Activated T-helper 1 cell treated with anti-CD3 and anti-CD28 coated beads, Interleukin-12 subunit alpha, Interleukin-12 subunit beta, Interleukin-2, Interleukin-4 antibody, amounts not matched to agents 30 ng/mL and 10 ng/mL and 1 ng/mL, durations not matched to agents 14 hours and 24 hours and 36 hours (primary cell): ENCODE measurements at regions of chr11 and their contacts with region 1.

Region 1: DNA sequence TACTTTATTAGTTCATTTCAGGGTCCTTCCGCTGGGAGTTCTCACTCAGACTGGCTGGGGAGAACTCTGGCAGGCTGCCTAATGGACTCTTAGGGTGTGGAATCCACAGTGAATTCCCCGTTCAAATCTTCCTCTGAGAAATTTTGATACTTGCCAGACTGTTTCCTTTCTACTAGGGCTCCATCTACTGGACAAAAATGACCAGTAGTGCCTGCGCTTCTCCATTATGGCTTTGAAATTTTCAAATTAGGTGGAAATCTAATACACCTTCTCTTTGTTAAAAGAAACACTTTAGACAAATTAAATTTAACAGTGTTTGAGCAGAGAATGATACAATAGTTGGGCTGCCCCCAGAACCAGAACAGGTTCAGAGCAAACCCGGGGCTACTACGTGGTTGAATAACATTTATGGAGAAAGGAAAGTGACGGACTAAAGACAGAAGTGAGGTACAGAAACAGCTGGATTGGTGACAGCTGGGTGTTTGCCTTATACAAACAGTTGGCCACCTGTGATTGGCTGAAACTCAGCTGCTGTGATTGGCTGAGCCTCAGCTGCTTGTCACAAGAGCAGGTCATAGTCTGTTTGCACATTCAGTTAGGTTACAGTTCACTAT is 52.9 kb upstream of the FDX1 start:
- DNase-seq: no peak
- H3K4me3 Mint-ChIP-seq: no peak overlapping the region
- H3K27ac Mint-ChIP-seq: no peak overlapping the region
- H3K4me1 Mint-ChIP-seq: peaks cover 40% of the 10 kb centered on the region
- H3K27me3 Mint-ChIP-seq: no peaks in the 10 kb centered on the region

Region 2: DNA sequence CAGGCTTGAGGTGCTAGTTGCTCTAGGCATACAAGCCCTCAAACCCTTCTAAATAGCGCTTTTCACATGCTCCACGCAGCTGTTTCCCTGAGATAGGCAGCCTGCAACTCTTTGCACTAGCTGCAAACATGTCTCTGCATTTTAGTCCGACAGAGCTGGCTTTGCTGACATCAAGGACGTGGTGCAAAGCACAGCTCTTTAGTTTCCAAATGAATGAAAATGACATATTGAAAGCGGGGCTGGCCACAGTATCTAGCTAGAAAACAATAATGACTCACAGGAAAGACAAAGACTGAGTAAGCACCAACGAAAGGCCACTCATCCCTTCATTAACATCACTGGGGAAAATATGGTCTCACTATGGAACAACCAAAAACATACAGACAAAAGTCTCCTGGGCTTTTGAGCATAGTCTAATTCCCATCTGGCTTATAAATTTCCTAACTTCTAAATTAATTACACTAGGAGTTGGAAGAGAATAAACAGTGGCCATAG is 298.9 kb before region 1 on chr11:
- intact Hi-C with region 1: loop called (anchors 1 kb)
- DNase-seq: peak; percentile 47
- H3K4me3 Mint-ChIP-seq: peak overlapping the region; percentile 28
- H3K27ac Mint-ChIP-seq: peak overlapping the region; percentile 75
- H3K4me1 Mint-ChIP-seq: peaks cover 38% of the 10 kb centered on the region
- H3K27me3 Mint-ChIP-seq: peaks cover 8% of the 10 kb centered on the region

Region 3: GRCh38 chr11:110195845-110196754 is 180.7 kb before region 1 on chr11:
- intact Hi-C with region 1: loop called (anchors 1 kb)
- DNase-seq: no peak
- H3K4me3 Mint-ChIP-seq: no peak overlapping the region
- H3K27ac Mint-ChIP-seq: no peak overlapping the region
- H3K4me1 Mint-ChIP-seq: peaks cover 15% of the 10 kb centered on the region
- H3K27me3 Mint-ChIP-seq: peaks cover 34% of the 10 kb centered on the region

Region 4: DNA sequence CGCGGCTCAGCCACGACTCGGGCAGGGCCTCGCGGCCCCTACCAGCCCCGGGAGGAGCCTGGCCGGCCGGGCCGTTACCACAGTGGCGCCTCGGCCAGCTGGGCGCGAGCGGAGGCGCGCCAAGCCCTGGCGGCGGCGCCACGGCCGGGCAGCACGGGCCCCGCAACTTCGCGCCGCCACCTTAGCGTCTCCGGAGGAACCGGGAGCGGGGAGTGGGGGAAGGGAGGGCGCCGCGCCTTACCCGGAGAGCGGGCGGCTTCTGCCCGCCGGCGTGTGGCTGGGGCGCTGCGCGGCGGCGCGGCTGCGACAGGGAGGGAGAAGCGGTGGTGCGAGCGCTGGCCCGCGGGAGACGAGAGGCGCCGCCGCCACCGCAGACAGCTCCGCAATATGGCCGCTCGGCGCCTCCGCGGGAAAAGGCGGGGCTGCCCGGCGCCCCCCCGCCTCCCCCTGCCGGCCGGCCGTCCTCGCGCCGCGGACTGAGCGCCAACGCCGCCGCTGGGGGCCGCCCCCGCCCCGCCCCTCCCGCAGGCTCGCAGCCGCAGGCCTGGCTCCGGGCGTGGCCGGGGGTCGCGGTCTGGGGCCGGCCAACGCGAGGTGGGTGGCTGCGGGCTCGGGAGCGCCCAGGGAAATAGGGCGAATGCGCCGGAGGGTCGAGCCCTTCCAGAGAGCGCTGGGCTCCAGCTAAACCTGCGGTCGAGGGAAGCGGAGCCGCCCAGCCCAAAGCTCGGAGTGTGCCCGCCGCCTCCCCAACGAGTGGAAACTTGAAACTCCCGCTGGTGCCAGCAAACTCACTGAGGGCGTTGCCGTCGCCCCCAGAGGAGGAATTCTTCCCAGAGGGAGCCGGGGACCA is 80.4 kb before region 1 on chr11 and contains the start of gene RDX:
- intact Hi-C with region 1: loop called (anchors 1 kb)
- DNase-seq: peak; percentile 63
- H3K4me3 Mint-ChIP-seq: peak within 1 kb of the TSS; percentile 86
- H3K27ac Mint-ChIP-seq: peak within 1 kb of the TSS; percentile 65
- H3K4me1 Mint-ChIP-seq: peaks cover 54% of the 10 kb centered on the region
- H3K27me3 Mint-ChIP-seq: no peaks in the 10 kb centered on the region
- total RNA-seq, gene RDX: 94.6 and 98.9 TPM in 2 replicates

Region 5: GRCh38 chr11:110429731-110430266 is 53.0 kb after region 1 on chr11 and contains the start of gene FDX1:
- intact Hi-C with region 1: loop called (anchors 1 kb)
- DNase-seq: peak; percentile 82
- H3K4me3 Mint-ChIP-seq: peak within 1 kb of the TSS; percentile 99
- H3K27ac Mint-ChIP-seq: peak within 1 kb of the TSS; percentile 98
- H3K4me1 Mint-ChIP-seq: peaks cover 51% of the 10 kb centered on the region
- H3K27me3 Mint-ChIP-seq: no peaks in the 10 kb centered on the region
- total RNA-seq, gene FDX1: 14.2 and 15.9 TPM in 2 replicates

Region 6: GRCh38 chr11:111230122-111230465 is 853.3 kb after region 1 on chr11:
- intact Hi-C with region 1: loop called (anchors 5 kb)
- DNase-seq: no peak
- H3K4me3 Mint-ChIP-seq: peak overlapping the region; percentile 67
- H3K27ac Mint-ChIP-seq: no peak overlapping the region
- H3K4me1 Mint-ChIP-seq: peaks cover 31% of the 10 kb centered on the region
- H3K27me3 Mint-ChIP-seq: peaks cover 12% of the 10 kb centered on the region